MCF 10A (cell line): ENCODE measurements at regions of chr12 and their contacts with region 1.

Region 1: DNA sequence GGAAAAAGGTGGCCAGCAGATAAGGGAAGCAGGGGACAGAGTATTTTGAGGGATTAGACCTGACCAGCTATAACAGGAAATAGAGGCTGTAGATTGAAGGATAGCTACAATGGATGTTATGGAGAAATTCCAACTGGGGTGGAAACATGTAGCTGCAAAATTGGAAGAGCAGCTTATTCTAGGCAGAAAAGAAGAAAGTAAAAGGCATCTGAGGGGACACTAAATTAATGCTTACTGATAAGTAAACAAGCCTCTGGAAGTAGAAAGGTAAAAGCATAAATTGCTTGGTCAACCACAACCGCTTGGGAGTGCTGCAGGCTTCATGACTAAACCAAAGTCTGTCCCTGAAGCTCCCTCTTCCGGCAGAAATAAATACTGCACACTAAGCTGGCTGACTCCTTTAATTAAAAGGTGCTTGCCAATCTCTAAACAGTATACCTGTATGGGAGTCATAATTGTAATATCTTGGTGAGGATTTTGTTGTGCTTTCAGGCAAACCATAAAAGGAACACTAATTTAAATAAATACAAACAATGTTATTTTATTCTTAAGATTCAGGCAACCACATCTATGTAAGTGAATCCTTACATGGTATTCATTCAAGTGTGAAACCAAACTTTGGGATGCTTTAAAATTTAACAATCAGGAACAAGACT is 7.7 kb downstream of the UBC start:
- DNase-seq: peak; percentile 95
- H3K4me3 Mint-ChIP-seq: peak overlapping the region; percentile 28
- H3K27ac Mint-ChIP-seq: peak overlapping the region; percentile 16
- H3K4me1 Mint-ChIP-seq: peaks cover 45% of the 10 kb centered on the region
- H3K27me3 Mint-ChIP-seq: no peaks in the 10 kb centered on the region
- CTCF ChIP-seq: peak; percentile 97

Region 2: DNA sequence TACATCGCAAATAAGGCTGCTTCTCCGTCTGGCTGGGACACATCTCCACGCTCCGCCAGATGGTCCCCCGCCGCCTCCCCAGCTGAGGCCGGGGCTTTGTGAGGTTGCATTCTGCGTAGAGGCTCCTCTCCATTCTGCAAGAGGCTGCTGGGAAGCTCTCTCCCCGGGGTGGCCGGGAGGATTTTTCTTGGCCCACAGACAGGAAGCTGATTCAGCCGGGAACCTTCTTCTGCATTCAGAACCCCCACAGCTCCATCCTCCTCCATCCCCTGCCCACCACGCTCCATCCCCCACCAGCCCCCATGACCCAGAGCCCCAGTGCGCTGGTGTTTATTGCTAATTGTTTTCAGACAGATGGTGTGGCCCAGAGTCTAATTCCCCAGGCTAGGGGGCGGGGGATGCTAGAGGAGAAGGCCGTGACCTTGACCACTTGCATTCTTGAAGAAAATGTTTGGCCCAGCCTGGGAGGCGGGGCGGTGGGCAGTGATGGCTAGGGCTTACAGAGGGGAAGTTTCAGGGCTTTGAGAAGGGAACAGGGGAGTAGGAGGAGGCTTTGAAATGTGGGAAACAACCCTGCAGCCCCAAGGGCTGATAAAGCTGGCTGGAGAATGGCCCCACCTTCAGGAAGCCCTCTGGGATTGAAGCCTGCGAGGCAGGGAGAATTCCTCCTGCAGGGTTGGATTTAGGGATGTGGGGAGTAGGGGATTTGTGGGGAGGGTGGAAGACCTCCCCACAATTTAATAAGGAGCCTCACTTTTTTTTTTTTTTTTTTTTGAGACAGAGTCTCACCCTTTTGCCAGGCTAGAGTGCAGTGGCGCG is 250.8 kb before region 1 on chr12:
- CTCF ChIA-PET with region 1: no interaction called
- POLR2A ChIA-PET with region 1: no interaction called
- intact Hi-C with region 1: no loop called
- DNase-seq: peak; percentile 64
- H3K4me3 Mint-ChIP-seq: no peak overlapping the region
- H3K27ac Mint-ChIP-seq: no peak overlapping the region
- H3K4me1 Mint-ChIP-seq: peaks cover 3% of the 10 kb centered on the region
- H3K27me3 Mint-ChIP-seq: no peaks in the 10 kb centered on the region
- CTCF ChIP-seq: no peak

Region 3: GRCh38 chr12:124774462-124775167 is 132.1 kb before region 1 on chr12:
- CTCF ChIA-PET with region 1: interaction called, 10 read pairs
- POLR2A ChIA-PET with region 1: no interaction called
- intact Hi-C with region 1: loop called (anchors 2 kb)
- DNase-seq: peak; percentile 92
- H3K4me3 Mint-ChIP-seq: peak overlapping the region; percentile 32
- H3K27ac Mint-ChIP-seq: peak overlapping the region; percentile 40
- H3K4me1 Mint-ChIP-seq: peaks cover 39% of the 10 kb centered on the region
- H3K27me3 Mint-ChIP-seq: no peaks in the 10 kb centered on the region
- CTCF ChIP-seq: peak; percentile 12

Region 4: DNA sequence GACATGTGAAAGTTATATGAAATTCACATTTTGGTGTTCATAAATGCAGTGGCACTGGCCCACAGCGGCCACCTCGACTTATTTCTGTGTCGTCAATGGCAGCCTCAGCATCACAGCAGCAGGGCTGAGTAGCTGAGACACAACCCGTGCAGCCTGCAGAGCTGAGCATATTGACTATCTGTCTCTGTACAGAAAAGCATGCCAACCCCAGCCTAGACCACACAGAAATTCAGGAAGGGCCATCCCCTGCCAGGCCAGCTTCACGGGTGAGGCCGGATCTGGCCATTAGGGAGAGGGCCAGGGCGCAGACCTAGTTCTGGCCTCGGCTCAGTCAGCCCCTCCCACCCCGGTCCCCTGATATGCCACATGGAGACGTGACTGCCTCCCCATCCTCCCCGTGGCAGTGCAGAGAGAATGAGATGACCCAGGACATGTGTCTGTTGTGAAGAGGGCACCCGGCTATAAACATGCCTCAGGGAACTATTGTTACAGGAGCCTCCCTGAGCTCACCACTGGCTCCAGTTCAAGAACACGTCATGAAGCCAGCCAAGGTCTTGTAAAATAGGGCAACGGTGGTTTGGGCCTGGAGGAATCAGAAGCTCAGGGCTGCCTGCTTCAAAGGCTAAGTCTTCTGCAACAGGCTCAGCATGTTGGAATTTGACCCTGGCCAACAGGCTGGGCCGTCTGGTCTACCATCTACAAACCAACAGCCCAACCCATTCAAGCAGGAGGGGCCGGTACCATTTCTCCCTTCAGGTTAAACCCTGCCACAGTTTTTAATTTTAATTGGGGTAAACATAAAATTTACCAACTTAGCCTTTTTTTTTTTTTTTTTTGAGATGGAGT is 68.6 kb before region 1 on chr12:
- CTCF ChIA-PET with region 1: interaction called, 10 read pairs
- POLR2A ChIA-PET with region 1: interaction called, 11 read pairs
- intact Hi-C with region 1: no loop called
- DNase-seq: peak; percentile 99
- H3K4me3 Mint-ChIP-seq: no peak overlapping the region
- H3K27ac Mint-ChIP-seq: peak overlapping the region; percentile 35
- H3K4me1 Mint-ChIP-seq: peaks cover 21% of the 10 kb centered on the region
- H3K27me3 Mint-ChIP-seq: no peaks in the 10 kb centered on the region
- CTCF ChIP-seq: no peak

Region 5: DNA sequence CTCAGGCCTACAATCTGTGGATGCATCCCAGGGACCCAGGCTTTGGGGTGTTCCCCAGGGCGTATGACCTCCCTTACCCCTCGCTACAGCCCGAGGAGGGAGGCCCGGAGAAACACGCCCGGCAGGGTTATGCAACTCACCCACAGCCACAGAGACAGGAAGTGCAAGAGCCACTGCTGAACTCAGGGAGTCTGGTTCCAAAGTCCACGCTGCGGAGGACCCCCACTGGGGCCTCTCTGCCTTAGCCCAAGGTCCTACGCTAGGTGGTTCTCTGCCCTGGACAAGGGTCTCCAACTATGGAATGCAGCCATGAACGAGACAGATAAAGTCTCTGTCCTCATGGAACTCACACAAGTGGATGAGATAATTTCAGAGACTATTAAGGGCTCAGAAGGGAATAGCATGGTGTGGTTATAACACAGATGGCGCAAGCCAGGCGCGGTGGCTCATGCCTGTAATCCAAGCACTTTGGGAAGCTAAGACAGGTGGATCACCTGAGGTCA is 54.4 kb before region 1 on chr12:
- CTCF ChIA-PET with region 1: no interaction called
- POLR2A ChIA-PET with region 1: no interaction called
- intact Hi-C with region 1: no loop called
- DNase-seq: no peak
- H3K4me3 Mint-ChIP-seq: no peak overlapping the region
- H3K27ac Mint-ChIP-seq: peak overlapping the region; percentile 64
- H3K4me1 Mint-ChIP-seq: peaks cover 30% of the 10 kb centered on the region
- H3K27me3 Mint-ChIP-seq: no peaks in the 10 kb centered on the region
- CTCF ChIP-seq: no peak

Region 6: DNA sequence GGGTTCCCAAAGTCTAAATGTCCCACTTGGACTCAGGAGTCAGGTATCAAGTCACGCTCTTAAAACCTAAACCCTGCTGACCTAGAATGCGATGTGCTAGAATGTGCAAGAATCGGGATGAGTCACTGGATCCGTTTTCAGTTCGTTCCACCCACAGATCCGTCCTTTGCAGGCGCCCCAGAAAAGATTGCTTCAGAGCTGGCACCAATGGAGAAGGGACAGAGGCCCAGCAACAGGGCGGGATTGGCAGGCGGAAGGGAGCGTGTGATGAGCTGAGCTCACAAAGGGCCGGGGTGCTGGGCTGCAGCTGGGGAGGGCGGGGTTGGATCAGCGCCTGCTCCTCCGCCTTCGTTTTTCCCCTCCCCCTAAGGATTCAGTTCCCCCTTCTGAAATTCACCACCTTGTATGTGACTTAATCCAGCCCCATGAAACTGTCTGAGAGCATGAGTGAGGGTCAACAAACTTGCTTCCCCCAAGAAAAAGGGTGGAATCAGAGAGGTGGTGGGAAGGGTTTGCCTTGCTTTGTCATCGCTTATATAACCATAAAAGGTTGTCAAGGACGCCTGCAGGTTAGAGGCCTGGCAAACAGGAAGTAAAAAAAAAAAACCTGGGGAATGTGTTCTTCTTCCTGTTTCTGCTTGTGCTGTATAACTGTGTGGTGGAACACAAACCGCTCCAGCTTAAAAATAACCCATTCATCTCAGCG is 10.6 kb after region 1 on chr12:
- CTCF ChIA-PET with region 1: interaction called, 29 read pairs
- POLR2A ChIA-PET with region 1: interaction called, 2,121 read pairs
- intact Hi-C with region 1: no loop called
- DNase-seq: peak; percentile 100
- H3K4me3 Mint-ChIP-seq: peak overlapping the region; percentile 95
- H3K27ac Mint-ChIP-seq: peak overlapping the region; percentile 100
- H3K4me1 Mint-ChIP-seq: peaks cover 44% of the 10 kb centered on the region
- H3K27me3 Mint-ChIP-seq: no peaks in the 10 kb centered on the region
- CTCF ChIP-seq: no peak

Region 7: DNA sequence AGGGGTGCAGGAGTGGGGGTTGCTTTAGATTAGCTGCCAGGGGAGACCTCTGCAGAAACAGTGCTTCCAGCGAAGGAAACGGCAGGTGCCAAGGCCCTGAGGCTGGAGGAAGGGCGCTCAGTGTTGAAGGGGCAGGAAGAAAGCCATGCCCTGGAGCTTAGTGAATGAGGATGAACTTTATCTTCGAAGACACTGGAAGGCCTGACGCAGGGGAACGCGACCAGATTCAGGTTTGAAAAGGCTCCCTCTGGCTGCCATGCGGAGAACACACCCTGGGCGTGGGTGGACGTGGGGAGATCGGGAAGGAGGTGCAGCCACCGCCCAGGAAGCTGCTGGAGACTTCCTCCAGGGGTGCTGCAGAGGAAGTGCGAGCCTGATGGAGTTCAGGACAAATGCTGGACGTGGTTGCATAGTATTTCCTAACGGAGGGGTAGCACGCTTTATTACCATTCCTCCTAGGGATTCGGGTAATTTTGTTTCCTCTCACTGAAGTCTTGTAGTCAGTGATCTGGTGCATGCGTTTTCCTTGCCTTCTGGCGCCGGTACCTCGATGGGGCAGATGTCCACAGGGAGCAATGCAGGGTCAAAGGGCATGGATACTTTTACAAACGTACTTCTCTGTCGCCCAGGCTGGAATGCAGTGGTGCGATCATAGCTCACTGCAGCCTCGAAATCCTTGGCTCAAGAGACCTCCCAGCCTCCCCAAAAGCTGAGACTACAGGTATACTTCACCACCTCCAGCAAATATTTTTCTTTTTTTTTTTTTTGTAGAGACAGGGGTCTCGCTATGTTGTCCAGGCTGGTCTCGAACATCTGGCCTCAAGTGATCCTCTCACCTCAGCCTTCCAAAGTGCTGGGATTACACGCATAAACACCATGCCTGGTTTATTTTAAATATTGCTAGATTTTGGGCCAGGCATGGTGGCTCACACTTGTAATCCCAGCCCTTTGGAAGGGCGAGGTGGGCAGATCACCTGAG is 34.1 kb after region 1 on chr12:
- CTCF ChIA-PET with region 1: interaction called, 200 read pairs
- POLR2A ChIA-PET with region 1: interaction called, 2,121 read pairs
- intact Hi-C with region 1: loop called (anchors 1 kb)
- DNase-seq: peak; percentile 95
- H3K4me3 Mint-ChIP-seq: no peak overlapping the region
- H3K27ac Mint-ChIP-seq: no peak overlapping the region
- H3K4me1 Mint-ChIP-seq: peaks cover 8% of the 10 kb centered on the region
- H3K27me3 Mint-ChIP-seq: no peaks in the 10 kb centered on the region
- CTCF ChIP-seq: peak; percentile 92

Region 8: DNA sequence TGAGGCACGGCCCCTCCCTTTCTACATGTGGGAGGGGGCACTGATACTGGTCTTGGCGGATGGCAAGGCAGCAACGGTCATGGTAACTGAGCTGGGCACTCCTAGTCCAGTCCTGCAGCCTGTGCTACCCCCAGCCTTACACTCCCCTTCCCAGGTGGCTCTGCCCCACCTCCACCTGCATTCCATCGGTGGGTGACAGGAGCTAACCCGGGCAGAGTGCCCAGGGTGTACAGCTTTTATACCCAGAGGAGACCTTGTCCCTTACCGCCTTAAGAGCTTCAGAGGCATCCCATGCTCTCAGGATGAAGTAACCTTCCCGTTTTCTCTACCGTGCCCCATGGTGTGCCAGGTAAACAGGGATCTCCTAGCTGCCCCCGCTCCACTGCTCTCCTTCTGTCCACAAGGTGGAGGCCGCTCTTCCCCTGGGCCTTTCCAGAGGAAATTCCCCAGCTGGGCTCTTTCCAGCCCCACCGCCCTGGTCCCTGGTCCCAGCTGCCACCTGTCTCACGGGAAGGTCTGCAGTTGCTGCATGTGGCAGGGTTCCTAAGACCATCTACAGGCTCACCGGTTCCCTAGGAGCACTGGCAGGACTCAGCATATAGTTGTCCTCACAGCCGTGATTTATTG is 107.2 kb after region 1 on chr12:
- CTCF ChIA-PET with region 1: no interaction called
- POLR2A ChIA-PET with region 1: no interaction called
- intact Hi-C with region 1: no loop called
- DNase-seq: no peak
- H3K4me3 Mint-ChIP-seq: no peak overlapping the region
- H3K27ac Mint-ChIP-seq: peak overlapping the region; percentile 47
- H3K4me1 Mint-ChIP-seq: no peaks in the 10 kb centered on the region
- H3K27me3 Mint-ChIP-seq: no peaks in the 10 kb centered on the region
- CTCF ChIP-seq: no peak